ENCODE measurements at regions of chr12 and their contacts with region 1.

Region 1: DNA sequence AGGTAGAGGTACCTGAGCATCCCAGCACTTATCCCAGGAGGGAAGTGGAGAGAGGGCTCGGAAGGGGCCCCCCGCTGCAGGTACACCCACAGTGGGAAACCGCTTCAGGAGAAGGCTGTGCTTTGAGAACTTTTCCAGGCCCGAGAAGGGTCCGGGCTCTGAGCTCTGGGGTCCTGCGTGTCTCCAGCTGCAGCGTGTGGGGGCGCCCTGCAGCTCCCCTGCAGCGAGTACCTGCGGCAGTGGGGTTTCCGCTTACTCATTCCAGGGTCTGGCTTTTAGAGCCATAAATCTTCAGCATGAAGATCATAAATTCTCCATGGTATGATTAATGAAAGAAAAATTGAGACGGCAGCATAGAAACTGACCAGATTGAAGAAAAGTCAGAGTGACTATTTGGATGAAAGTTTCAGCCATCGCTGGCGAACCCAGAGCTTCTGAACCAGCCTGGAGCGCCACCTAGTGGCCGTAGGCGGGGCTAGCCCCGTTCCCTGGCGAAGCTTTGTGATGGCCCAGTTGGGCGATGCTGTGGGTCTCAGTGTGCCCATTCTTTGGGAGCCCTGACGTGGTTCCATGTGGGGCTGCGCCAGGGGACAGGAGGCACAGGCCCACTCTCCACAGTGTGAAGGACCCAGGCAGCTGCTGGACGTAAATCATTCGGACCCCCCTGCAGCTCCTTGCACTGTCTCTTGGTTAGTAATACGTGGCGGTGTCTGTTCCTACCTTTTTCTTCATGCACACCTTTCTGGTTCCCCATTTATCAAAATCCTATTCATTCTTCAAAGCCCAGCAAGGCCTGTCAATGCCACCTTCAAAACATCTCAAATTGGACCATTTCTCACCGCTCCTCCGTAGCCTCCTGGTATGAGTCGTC is 198.2 kb downstream of the TSPAN9 start:
- DNase-seq: peak; percentile 82
- ATAC-seq: peak; percentile 77
- H3K4me3 ChIP-seq: no peak overlapping the region
- H3K27ac ChIP-seq: no peak overlapping the region
- H3K4me1 ChIP-seq: no peaks in the 10 kb centered on the region
- H3K27me3 ChIP-seq: no peaks in the 10 kb centered on the region
- CTCF ChIP-seq: peak; percentile 98

Region 2: DNA sequence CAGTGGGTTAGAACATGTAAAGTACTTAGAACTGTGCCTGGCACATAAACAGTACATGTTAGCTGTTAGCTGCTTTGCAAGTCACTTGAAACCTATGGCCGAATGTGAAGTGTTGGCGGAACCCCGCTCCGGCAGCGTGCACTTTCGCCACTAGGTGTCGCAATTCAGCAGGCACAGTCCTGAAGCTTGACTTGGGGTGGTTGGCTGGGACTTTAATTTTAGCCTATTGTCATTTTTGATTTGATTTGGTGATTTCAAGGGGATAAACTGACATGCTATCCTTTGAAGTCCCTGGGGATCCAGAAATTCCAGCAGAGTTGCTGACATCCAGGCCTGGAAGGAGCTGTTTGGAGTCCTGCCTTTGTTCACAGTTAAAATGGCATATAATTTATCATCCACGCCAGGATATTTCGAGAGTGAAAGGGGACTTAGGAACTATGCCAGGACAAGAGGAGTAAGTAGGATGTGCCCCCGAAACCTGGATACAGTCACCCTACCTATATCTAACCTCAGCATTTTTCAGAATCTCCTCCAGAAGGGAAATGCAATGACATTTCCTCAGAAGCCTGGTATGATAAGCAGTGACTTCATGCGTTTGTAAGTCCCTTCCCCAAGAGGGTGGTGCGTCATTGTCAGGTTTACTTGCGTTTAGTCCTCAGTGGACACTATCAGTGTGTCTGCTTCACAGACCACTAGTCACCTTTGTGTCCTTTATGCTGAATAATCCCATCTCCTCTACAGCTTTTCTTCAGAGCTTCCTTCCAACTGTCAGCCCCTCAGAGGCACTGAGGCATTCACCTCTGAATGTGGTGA is 201.8 kb before region 1 on chr12:
- intact Hi-C with region 1: loop called (anchors 10 kb)
- DNase-seq: peak; percentile 89
- ATAC-seq: peak; percentile 61
- H3K4me3 ChIP-seq: no peak overlapping the region
- H3K27ac ChIP-seq: no peak overlapping the region
- H3K4me1 ChIP-seq: peaks cover 6% of the 10 kb centered on the region
- H3K27me3 ChIP-seq: no peaks in the 10 kb centered on the region
- CTCF ChIP-seq: peak; percentile 100

Region 3: GRCh38 chr12:3135522-3136461 is 139.6 kb before region 1 on chr12:
- intact Hi-C with region 1: loop called (anchors 5 kb)
- DNase-seq: no peak
- ATAC-seq: peak; percentile 72
- H3K4me3 ChIP-seq: no peak overlapping the region
- H3K27ac ChIP-seq: no peak overlapping the region
- H3K4me1 ChIP-seq: peaks cover 46% of the 10 kb centered on the region
- H3K27me3 ChIP-seq: no peaks in the 10 kb centered on the region
- CTCF ChIP-seq: peak; percentile 79

Measured in upper lobe of right lung (tissue), 1 donor.